ENCODE measurements at regions of chr10 and their contacts with region 1.

Region 1: DNA sequence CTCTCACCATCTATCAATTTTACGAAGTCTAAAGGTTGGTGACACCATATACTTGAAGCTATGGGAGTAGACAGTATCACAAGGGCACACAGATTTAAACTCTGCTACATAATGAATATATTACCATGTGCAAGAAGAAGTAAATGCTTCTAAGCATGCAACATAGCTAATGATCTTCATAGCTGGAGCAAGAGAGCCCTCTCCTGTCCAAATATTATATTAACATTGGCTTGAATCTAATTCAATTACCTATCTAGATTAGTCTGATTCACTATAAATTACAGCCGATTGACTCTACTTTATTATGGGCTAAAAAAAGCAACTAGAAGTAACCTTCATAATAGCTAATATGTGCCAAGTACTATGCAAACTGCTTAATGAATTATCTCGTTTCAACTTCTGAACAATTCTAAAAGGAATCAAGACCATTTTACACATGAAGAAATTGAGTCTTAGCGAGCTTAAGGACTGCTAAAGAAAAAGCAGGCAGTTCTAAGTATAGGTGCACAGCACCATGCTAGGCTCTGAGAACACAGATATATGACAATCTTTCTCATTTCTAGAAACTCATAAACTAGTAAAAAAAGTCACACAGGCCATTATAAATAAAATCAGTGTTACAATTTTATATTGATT is 21.9 kb downstream of the FRA10AC1 start:
- DNase-seq: no peak
- H3K4me3 ChIP-seq: no peak overlapping the region
- H3K27ac ChIP-seq: no peak overlapping the region
- H3K4me1 ChIP-seq: peaks cover 17% of the 10 kb centered on the region
- H3K27me3 ChIP-seq: no peaks in the 10 kb centered on the region
- CTCF ChIP-seq: peak; percentile 59

Region 2: DNA sequence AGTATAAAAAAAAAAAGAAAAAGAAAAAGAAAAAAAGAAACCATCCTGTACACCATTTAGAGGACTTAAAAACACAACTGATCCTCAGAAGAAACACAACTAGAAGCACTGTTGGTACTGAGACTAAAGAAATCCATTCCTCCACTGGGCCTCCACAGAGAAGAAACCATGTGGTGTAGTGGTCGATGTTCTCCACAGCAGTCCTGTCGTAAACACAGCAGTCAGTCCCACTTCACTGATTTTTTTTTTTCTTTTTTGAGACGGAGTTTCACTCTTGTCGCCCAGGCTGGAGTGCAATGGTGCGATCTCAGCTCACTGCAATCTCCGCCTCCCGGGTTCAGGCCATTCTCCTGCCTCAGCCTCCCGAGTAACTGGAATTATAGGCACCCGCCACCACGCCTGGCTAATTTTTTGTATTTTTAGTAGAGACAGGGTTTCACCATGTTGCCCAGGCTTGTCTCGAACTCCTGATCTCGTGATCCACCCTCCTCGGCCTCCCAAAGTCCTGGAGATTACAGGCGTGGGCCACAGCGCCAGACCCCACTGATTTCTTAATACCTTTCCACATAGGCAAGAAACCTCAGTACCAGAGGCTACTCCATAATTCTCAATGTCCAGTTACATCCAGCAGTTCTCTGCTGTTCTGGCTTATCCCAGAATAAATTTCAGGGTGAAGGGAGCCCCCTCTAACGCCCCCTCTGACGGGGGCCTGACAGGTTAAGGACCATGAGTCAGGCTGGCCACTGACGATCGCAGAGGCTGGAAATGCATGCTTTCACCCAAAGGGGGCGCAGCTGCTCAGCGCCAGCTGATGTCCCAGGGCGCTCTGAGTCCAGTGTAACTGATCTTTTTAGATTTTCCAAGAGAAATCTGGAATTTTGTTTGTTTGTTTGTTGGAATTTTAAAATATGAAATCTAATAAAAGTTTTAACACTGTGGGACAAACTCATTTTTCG is 138.8 kb before region 1 on chr10:
- intact Hi-C with region 1: no loop called
- DNase-seq: peak; percentile 41
- H3K4me3 ChIP-seq: peak overlapping the region; percentile 56
- H3K27ac ChIP-seq: peak overlapping the region; percentile 58
- H3K4me1 ChIP-seq: peaks cover 11% of the 10 kb centered on the region
- H3K27me3 ChIP-seq: peaks cover 7% of the 10 kb centered on the region
- CTCF ChIP-seq: peak; percentile 84

Region 3: GRCh38 chr10:93554760-93555432 is 125.6 kb before region 1 on chr10:
- intact Hi-C with region 1: loop called (anchors 5 kb)
- DNase-seq: peak; percentile 69
- H3K4me3 ChIP-seq: no peak overlapping the region
- H3K27ac ChIP-seq: no peak overlapping the region
- H3K4me1 ChIP-seq: no peaks in the 10 kb centered on the region
- H3K27me3 ChIP-seq: peaks cover 4% of the 10 kb centered on the region
- CTCF ChIP-seq: peak; percentile 73

Region 4: GRCh38 chr10:94108200-94108599 is 427.7 kb after region 1 on chr10:
- intact Hi-C with region 1: no loop called
- DNase-seq: no peak
- H3K4me3 ChIP-seq: no peak overlapping the region
- H3K27ac ChIP-seq: no peak overlapping the region
- H3K4me1 ChIP-seq: peaks cover 24% of the 10 kb centered on the region
- H3K27me3 ChIP-seq: no peaks in the 10 kb centered on the region
- CTCF ChIP-seq: no peak

Measured in left ventricle myocardium inferior (tissue), 1 donor.